Mammary epithelial cell (primary cell): ENCODE measurements at regions of chr15 and their contacts with region 1.

Region 1: DNA sequence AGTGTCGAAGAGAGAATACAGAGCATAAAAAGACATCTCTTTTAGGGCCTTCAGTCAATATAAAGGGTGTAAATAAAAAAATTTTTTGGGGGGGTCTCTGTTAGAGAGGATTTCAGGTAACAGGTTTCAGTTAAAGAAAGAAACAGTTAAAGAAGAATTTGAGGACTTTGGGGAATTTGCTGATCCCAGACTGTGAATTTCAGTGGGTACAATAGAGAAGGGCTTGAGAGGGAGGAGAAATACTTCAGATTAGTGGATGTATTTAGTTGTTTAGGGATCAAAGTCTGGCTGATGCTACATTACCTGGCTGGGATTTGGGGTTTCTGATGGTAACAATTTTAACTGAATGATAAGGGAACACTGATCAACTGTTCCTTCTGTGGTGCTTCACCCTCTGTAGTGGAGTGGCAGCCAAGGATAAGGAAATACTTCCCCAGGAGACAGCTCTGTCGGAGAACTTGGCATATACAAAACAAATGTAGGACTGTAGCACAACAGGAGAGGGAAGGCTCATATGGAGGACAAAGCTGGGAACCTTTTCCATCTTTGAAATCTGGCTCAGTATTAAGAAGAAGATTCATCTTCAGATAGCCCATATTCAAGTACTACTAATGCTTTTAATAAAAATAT is 79.2 kb downstream of the MEF2A start:
- DNase-seq: no peak
- H3K4me3 ChIP-seq: no peak overlapping the region
- H3K27ac ChIP-seq: no peak overlapping the region
- H3K4me1 ChIP-seq: no peaks in the 10 kb centered on the region
- H3K27me3 ChIP-seq: no peaks in the 10 kb centered on the region
- CTCF ChIP-seq: no peak

Region 2: GRCh38 chr15:99592145-99592791 is 52.8 kb before region 1 on chr15:
- CTCF ChIA-PET with region 1: no interaction called
- dilution Hi-C with region 1: no loop called
- in situ Hi-C with region 1: no loop called
- intact Hi-C with region 1: loop called (anchors 10 kb)
- DNase-seq: no peak
- H3K4me3 ChIP-seq: no peak overlapping the region
- H3K27ac ChIP-seq: no peak overlapping the region
- H3K4me1 ChIP-seq: no peaks in the 10 kb centered on the region
- H3K27me3 ChIP-seq: no peaks in the 10 kb centered on the region
- CTCF ChIP-seq: no peak